Caco-2 (cell line): ENCODE measurements at regions of chr5 and their contacts with region 1.

Region 1: DNA sequence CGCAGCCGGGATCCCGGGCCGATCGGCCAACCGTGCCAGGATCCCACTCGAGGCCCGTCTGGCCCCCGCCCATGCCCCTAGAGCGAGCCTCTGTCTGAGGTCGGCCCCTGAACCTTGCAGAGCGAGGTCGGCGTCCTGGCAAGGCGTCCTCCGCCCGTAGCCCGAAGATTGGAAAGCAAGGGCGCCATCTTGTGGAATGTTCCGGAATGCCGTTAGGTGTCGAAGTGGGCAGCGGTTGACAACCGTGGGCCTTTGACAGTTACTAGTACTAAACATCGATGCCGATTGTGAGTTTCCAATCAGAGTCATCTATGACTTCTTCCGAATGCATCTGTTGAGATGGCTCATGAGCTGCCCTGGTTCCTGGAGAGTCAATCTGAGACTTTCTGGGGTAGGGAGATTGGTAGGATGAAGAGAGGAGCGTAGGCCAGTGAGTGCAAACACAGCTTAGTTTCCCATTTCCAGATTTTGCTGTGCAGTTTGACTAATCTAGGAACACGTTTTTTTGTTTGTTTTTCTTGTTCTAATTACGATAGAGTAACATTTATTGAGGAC is 923 bp upstream of the PLK2 start:
- DNase-seq: peak; percentile 91 to 93
- H3K4me3 ChIP-seq: peak overlapping the region; percentile 99
- H3K4me3 Mint-ChIP-seq: peak overlapping the region; percentile 94
- H3K27ac Mint-ChIP-seq: peak overlapping the region; percentile 94
- H3K4me1 ChIP-seq: peaks cover 17% of the 10 kb centered on the region
- H3K4me1 Mint-ChIP-seq: peaks cover 24% of the 10 kb centered on the region
- H3K27me3 ChIP-seq: no peaks in the 10 kb centered on the region
- H3K27me3 Mint-ChIP-seq: no peaks in the 10 kb centered on the region
- CTCF ChIP-seq: peak; percentile 78 to 88

Region 2: DNA sequence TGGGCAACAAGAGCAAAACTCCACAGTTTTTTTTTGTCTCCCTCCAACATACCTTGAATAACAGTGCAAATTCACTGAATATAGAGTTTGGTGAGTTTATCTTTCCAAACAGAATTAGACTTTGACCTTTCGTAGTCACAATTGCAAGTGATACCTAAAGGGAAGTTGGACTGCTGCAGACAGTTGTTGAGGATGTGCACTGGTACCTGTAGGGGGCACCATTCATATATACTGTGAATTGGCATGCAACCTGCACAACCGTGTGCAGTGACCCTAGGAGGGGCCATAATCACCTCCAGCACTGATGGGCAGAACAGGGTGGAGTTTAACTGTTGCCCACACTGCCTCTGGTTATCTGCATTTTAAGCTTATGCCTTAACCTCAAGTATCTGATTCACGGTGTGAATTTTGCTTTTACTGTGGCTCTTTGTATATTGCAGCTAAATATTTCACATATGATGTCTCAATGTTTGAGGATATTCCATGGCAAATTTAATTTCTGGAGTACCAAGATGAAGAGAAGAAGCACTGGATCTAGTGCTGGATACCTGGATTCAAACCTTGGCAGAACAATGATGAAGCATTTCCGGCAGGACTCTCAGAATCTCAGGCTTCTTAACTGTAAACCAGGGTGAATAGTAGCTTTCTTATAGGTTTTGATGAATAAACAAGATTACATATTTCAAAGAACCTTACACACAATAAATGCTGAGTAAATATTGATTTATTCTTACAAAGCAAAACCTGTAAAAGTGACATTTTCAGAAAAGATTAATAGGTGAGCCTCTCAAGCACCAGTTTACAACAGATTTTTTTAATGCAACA is 1122.5 kb before region 1 on chr5:
- CTCF ChIA-PET with region 1: no interaction called
- POLR2A ChIA-PET with region 1: no interaction called
- intact Hi-C with region 1: loop called (anchors 1 kb)
- DNase-seq: peak; percentile 54 to 58
- H3K4me3 ChIP-seq: no peak overlapping the region
- H3K4me3 Mint-ChIP-seq: peak overlapping the region; percentile 35
- H3K27ac Mint-ChIP-seq: peak overlapping the region; percentile 61
- H3K4me1 ChIP-seq: peaks cover 51% of the 10 kb centered on the region
- H3K4me1 Mint-ChIP-seq: peaks cover 17% of the 10 kb centered on the region
- H3K27me3 ChIP-seq: no peaks in the 10 kb centered on the region
- H3K27me3 Mint-ChIP-seq: no peaks in the 10 kb centered on the region
- CTCF ChIP-seq: peak; percentile 41 to 46

Region 3: GRCh38 chr5:57650360-57651069 is 810.3 kb before region 1 on chr5:
- CTCF ChIA-PET with region 1: interaction called, 11 read pairs
- POLR2A ChIA-PET with region 1: interaction called, 3 read pairs
- intact Hi-C with region 1: loop called (anchors 1 kb)
- DNase-seq: peak; percentile 84 to 89
- H3K4me3 ChIP-seq: peak overlapping the region; percentile 4; the same call in 1 of the 2 replicates
- H3K4me3 Mint-ChIP-seq: peak overlapping the region; percentile 30
- H3K27ac Mint-ChIP-seq: peak overlapping the region; percentile 0
- H3K4me1 ChIP-seq: peaks cover 9% of the 10 kb centered on the region
- H3K4me1 Mint-ChIP-seq: peaks cover 12% of the 10 kb centered on the region
- H3K27me3 ChIP-seq: no peaks in the 10 kb centered on the region; the same call in 1 of the 2 replicates
- H3K27me3 Mint-ChIP-seq: no peaks in the 10 kb centered on the region
- CTCF ChIP-seq: peak; percentile 74 to 76

Region 4: DNA sequence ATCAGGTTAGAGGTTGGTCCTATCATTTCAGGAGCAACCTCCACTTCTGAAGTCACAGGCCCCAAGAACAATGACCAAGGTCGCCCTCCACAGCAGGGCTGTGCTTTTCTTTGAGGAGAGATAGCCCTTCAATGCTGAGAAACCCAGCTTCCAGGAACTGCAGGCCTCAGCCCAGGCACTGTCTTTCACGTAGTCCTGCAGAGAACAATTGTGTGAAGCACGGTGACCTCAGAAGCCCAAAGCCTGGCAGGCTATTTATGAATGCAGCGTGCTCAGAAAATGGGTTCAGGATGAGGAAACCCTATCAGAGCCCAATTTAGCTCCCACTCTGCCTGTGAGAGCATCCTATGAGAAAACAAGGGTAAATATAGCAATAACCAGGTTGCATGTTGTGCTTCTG is 389.2 kb before region 1 on chr5:
- CTCF ChIA-PET with region 1: no interaction called
- POLR2A ChIA-PET with region 1: no interaction called
- intact Hi-C with region 1: loop called (anchors 5 kb)
- DNase-seq: no peak
- H3K4me3 ChIP-seq: no peak overlapping the region
- H3K4me3 Mint-ChIP-seq: no peak overlapping the region
- H3K27ac Mint-ChIP-seq: peak overlapping the region; percentile 1
- H3K4me1 ChIP-seq: peaks cover 16% of the 10 kb centered on the region
- H3K4me1 Mint-ChIP-seq: peaks cover 27% of the 10 kb centered on the region
- H3K27me3 ChIP-seq: no peaks in the 10 kb centered on the region
- H3K27me3 Mint-ChIP-seq: no peaks in the 10 kb centered on the region
- CTCF ChIP-seq: no peak

Region 5: DNA sequence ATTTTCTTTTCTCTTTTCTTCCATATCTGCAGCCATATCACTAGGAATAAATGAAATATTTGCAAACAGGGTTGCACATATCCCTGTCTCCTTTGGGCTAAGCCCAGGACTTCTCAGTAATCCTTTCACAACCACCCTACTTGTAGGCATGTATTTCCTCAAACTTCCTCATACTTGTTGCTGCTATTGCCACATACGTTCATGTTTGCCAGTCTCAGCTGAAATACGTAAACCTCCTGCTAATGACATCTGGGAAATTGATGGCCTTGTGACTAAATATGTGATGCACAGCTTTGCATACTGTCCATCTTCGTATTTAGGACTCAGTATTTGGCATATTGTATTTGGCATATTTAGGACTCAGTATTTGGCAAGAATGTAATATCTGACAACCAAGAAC is 225.5 kb before region 1 on chr5:
- CTCF ChIA-PET with region 1: no interaction called
- POLR2A ChIA-PET with region 1: no interaction called
- intact Hi-C with region 1: loop called (anchors 10 kb)
- DNase-seq: peak in 1 of 2 experiments; percentile 35
- H3K4me3 ChIP-seq: no peak overlapping the region
- H3K4me3 Mint-ChIP-seq: no peak overlapping the region
- H3K27ac Mint-ChIP-seq: no peak overlapping the region
- H3K4me1 ChIP-seq: 0 out of 2 replicates have a peak, but pooled peaks cover 7% of the 10 kb centered on the region
- H3K4me1 Mint-ChIP-seq: peaks cover 7% of the 10 kb centered on the region
- H3K27me3 ChIP-seq: no peaks in the 10 kb centered on the region
- H3K27me3 Mint-ChIP-seq: no peaks in the 10 kb centered on the region
- CTCF ChIP-seq: no peak